Heart left ventricle (tissue), 16 donors: ENCODE measurements at regions of chr12 and their contacts with region 1.

Region 1: GRCh38 chr12:71415336-71416231 is 24.0 kb upstream of the LGR5 start:
- DNase-seq: no peak
- ATAC-seq: peak in 3 of 4 donors; percentile 44 to 71 (median 55)
- H3K4me3 ChIP-seq: no peak overlapping the region
- H3K27ac ChIP-seq: no peak overlapping the region
- H3K4me1 ChIP-seq: no peaks in the 10 kb centered on the region
- H3K27me3 ChIP-seq: peaks cover 0 to 3% (median 0%) of the 10 kb centered on the region in 9 donors
- CTCF ChIP-seq: peak; percentile 51 to 79 (median 72)
- POLR2A ChIP-seq: no peak

Region 2: GRCh38 chr12:71551529-71551928 is 135.9 kb after region 1 on chr12:
- intact Hi-C with region 1: loop called in 3 of 10 experiments (anchors 5 to 10 kb)
- DNase-seq: no peak
- ATAC-seq: no peak
- H3K4me3 ChIP-seq: no peak overlapping the region
- H3K27ac ChIP-seq: no peak overlapping the region
- H3K4me1 ChIP-seq: no peaks in the 10 kb centered on the region
- H3K27me3 ChIP-seq: no peaks in the 10 kb centered on the region
- CTCF ChIP-seq: peak in 4 of 12 donors; percentile 22 to 35 (median 32)
- POLR2A ChIP-seq: no peak

Region 3: GRCh38 chr12:71567537-71567936 is 152.0 kb after region 1 on chr12:
- intact Hi-C with region 1: loop called in 1 of 10 experiments (anchors 10 kb)
- DNase-seq: no peak
- ATAC-seq: no peak
- H3K4me3 ChIP-seq: no peak overlapping the region
- H3K27ac ChIP-seq: no peak overlapping the region
- H3K4me1 ChIP-seq: no peaks in the 10 kb centered on the region
- H3K27me3 ChIP-seq: peaks cover 0 to 4% (median 0%) of the 10 kb centered on the region in 9 donors
- CTCF ChIP-seq: no peak
- POLR2A ChIP-seq: no peak

Region 4: GRCh38 chr12:71636704-71637115 is 221.1 kb after region 1 on chr12:
- intact Hi-C with region 1: loop called in 4 of 10 experiments (anchors 2 to 10 kb)
- DNase-seq: no peak
- ATAC-seq: peak in 1 of 4 donors; percentile 42
- H3K4me3 ChIP-seq: no peak overlapping the region
- H3K27ac ChIP-seq: no peak overlapping the region
- H3K4me1 ChIP-seq: peaks cover 0 to 5% (median 0%) of the 10 kb centered on the region in 12 donors
- H3K27me3 ChIP-seq: no peaks in the 10 kb centered on the region
- CTCF ChIP-seq: peak; percentile 54 to 84 (median 68)
- POLR2A ChIP-seq: no peak